Activated CD4-positive, alpha-beta memory T cell treated with anti-CD3 and anti-CD28 coated beads for 36 hours (primary cell): ENCODE measurements at regions of chr14 and their contacts with region 1.

Region 1: DNA sequence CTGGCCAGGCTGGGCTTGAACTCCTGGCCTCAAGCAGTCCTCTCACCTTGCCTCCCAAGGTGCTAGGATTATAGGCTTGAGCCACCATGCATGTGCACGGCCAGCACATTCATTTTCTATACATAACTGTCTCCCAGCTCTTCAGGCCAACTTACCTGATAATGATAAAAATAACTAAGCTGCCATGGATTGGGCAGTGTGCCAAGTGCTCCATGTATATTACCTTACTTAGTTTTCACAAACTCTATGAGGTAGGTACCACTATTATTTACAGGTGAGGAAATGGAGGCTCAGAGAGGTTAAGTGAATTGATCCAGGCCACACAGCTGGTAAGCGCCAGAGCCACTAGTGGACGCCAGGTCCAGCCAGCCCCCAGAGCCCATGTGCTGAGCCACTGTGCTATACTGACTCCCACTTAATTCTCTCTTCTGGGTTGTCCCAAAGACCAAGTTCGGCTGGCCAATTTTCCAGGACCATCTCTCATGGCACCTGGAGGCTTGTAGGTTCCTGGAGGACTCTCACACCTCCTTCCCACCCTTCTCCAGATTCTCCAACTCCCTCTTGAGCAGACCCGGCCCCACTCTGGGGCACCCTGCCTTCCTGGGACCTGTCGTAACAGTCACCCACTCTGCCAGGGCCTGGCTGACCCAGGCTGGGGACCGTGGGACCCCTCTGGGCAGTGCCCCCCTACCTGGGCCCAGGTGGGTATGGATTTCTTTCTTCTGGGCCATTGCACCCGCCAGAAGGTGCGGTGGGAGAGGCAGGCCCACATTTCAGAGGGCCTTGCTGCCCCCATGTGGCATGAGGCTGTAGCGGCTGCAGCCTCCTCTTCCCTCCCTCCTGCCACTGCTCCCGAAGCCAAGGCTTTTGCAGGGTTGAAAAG is 30.2 kb upstream of the CIPC start:
- DNase-seq: peak; percentile 73
- H3K4me3 Mint-ChIP-seq: no peak overlapping the region
- H3K27ac Mint-ChIP-seq: no peak overlapping the region
- H3K4me1 Mint-ChIP-seq: no peaks in the 10 kb centered on the region
- H3K27me3 Mint-ChIP-seq: no peaks in the 10 kb centered on the region

Region 2: GRCh38 chr14:76863724-76864407 is 204.0 kb before region 1 on chr14:
- CTCF ChIA-PET with region 1: interaction called, 28 read pairs
- POLR2A ChIA-PET with region 1: interaction called, 3 read pairs
- intact Hi-C with region 1: no loop called
- DNase-seq: peak; percentile 32
- H3K4me3 Mint-ChIP-seq: no peak overlapping the region
- H3K27ac Mint-ChIP-seq: no peak overlapping the region
- H3K4me1 Mint-ChIP-seq: peaks cover 23% of the 10 kb centered on the region
- H3K27me3 Mint-ChIP-seq: peaks cover 1% of the 10 kb centered on the region

Region 3: DNA sequence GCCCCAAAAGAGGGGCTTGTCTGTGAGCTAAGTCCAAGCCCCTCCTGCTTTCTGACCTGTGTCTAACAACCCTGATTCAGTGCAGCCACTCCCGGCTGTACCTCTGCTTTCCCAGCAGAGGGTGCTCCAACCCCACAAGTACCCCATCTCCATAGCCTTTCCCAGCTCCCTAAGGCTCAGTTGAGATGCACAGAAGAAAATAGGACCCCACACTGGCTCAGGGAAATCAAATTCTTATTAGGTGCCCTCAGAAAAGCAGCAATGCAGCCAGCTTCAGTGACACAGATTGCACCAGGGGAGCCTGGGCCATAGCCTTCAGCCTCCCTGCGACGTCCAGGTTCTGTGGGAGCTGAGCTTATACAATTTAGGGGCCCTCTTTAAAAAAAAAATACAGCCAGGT is 191.8 kb before region 1 on chr14:
- CTCF ChIA-PET with region 1: interaction called, 598 read pairs
- POLR2A ChIA-PET with region 1: no interaction called
- intact Hi-C with region 1: loop called (anchors 1 kb)
- DNase-seq: peak; percentile 61
- H3K4me3 Mint-ChIP-seq: no peak overlapping the region
- H3K27ac Mint-ChIP-seq: no peak overlapping the region
- H3K4me1 Mint-ChIP-seq: peaks cover 2% of the 10 kb centered on the region
- H3K27me3 Mint-ChIP-seq: no peaks in the 10 kb centered on the region

Region 4: DNA sequence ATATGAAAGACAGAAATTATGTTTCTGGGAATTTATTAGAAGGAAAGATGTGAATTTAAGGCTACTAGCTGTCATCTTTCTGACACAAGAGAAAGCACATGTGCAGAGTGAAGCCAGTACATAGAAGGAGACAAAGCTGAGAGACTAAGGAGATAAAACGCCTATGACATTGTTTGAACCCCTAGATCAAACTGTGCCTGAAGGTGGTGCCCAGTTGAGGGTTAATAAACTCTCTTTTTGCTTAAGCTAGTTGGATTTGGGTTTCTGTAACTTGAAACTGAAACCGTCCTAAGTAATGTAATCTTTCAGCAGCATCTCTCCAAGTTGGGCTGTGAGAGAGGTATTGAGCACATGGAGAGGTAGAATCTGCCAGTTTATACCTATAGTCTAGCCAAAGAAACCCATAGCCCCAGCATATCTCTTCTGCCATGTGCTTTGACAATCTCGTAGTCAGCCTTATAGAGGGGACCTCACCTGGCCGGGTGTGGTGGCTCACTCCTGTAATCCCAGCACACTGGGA is 157.4 kb before region 1 on chr14:
- CTCF ChIA-PET with region 1: interaction called, 146 read pairs
- POLR2A ChIA-PET with region 1: no interaction called
- intact Hi-C with region 1: loop called (anchors 1 kb)
- DNase-seq: no peak
- H3K4me3 Mint-ChIP-seq: no peak overlapping the region
- H3K27ac Mint-ChIP-seq: no peak overlapping the region
- H3K4me1 Mint-ChIP-seq: peaks cover 19% of the 10 kb centered on the region
- H3K27me3 Mint-ChIP-seq: no peaks in the 10 kb centered on the region

Region 5: GRCh38 chr14:76941946-76942805 is 125.7 kb before region 1 on chr14:
- CTCF ChIA-PET with region 1: interaction called, 12 read pairs
- POLR2A ChIA-PET with region 1: no interaction called
- intact Hi-C with region 1: no loop called
- DNase-seq: peak; percentile 50
- H3K4me3 Mint-ChIP-seq: no peak overlapping the region
- H3K27ac Mint-ChIP-seq: peak overlapping the region; percentile 67
- H3K4me1 Mint-ChIP-seq: peaks cover 24% of the 10 kb centered on the region
- H3K27me3 Mint-ChIP-seq: no peaks in the 10 kb centered on the region

Region 6: DNA sequence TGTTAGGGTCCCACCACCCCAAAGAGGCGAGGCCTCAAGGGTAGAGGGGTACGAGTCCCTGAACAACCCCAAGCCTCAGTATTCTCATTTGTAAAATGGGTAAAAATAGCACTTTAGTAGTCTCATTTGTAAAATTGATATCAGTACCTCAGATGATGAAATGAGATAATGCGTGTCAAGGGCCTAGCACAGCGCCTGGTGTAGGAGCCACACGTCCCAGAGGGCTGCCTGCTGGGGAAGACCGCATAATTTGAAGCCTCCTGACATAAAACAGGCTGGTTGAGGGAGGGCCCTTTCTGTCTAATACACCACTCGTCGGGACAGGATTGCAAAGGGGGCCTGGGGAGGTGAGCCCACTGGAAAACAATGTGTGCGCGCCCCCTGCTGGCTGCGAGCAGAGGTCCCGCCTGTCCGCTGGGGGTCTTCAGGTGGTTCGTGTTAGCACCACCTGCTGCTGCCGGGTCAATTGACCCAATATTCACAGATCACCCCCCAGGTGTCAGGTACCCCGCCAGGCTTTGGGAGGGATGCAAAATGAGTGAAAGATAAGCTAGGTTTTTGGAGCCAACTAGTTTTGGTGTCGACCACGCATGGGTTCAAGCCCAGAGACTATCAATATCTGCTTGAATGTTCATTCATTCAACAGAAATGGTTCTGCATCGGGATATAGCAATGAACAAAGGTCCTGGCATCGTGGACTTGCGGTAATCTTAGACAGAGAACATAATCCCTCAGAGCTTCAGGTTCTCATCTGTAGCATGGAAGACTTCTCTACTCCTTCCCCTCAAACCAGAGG is 14.6 kb before region 1 on chr14:
- CTCF ChIA-PET with region 1: interaction called, 38 read pairs
- POLR2A ChIA-PET with region 1: interaction called, 3 read pairs
- intact Hi-C with region 1: no loop called
- DNase-seq: peak; percentile 85
- H3K4me3 Mint-ChIP-seq: no peak overlapping the region
- H3K27ac Mint-ChIP-seq: peak overlapping the region; percentile 23
- H3K4me1 Mint-ChIP-seq: peaks cover 23% of the 10 kb centered on the region
- H3K27me3 Mint-ChIP-seq: no peaks in the 10 kb centered on the region

Region 7: DNA sequence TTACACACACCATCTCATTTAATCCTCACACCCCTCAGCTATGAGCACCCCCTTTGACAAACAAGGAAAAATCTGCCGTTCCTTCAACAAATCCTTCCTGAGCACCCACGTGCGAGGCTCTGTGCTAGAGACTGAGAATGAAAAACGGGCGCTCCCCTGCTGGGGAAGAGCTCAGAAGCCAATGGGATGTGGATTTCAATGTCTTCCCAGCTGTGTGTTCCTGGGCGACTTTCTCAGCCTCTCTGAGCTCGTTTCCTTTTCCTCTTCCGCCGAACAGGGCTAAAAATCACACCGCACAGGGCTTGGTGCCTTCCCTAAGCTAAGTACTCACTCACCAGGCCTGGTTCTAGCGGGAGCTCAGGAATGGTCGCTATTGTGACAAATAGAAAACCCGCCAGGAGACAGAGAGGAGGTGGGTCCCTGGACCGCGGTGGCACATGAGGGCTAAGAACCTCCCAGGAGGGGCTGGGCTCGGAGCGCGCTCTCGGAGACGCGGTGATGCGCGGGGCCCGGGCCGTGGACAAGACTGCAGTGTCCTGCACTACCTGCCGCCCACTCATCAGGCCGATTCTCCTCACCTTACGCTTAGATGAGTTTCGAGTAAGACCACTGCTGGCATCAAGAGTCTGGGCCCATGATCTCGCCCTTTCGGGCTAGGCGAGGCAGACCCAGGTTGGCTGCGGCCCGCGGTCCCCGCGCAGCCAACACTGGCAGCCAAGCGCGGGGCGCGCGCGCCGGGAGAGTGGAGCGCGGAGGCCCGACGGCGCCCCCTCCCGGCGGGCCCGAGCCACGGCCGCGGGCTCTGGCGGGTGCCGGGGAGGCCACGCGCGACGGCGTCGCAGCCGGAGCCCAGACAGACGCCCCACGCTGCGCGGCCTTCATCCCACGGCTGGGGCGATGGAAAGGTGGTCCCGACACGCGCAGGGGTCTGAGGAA is 56.7 kb after region 1 on chr14:
- CTCF ChIA-PET with region 1: interaction called, 34 read pairs
- POLR2A ChIA-PET with region 1: no interaction called
- intact Hi-C with region 1: no loop called
- DNase-seq: peak; percentile 77
- H3K4me3 Mint-ChIP-seq: peak overlapping the region; percentile 82
- H3K27ac Mint-ChIP-seq: peak overlapping the region; percentile 73
- H3K4me1 Mint-ChIP-seq: peaks cover 50% of the 10 kb centered on the region
- H3K27me3 Mint-ChIP-seq: peaks cover 2% of the 10 kb centered on the region